Ascending aorta (tissue), 2 donors: ENCODE measurements at regions of chr2 and their contacts with region 1.

Region 1: DNA sequence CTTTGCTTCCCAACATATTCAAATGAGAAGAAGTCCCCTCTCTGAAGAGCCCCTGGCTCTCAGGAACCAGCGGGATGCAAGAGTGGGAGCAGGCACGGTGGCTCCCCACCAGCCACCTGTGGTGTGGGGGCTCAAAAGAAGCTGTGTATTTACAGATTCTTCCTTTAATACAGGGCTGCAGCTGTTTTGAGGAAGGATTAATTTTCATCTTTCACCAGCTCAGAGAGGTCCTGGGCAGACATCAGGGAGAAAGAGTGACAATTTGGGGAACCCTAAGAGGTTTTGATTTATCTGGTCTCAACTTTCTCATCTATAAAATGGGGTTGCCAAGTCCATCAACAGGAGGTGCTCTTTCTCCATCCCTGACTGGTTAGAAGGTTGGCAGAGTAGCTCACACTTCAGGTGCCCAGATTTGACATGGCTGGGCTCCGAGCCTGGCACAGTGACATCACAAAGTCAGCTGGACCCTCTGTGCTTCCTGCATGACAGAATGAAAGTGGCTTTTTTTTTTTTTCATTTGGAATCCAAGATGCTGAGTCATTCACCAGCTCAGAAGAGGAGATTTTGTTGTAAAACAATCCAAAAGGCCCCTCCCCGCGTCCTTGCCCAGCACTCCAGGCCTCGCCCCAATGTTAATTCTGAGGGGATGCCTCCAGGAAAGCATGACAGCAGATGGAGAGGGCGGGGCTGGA is 15.5 kb upstream of the SIX2 start:
- DNase-seq: peak; percentile 69 to 90
- H3K4me3 ChIP-seq: no peak overlapping the region
- H3K27ac ChIP-seq: peak overlapping the region in 1 of 2 donors; percentile 71
- H3K4me1 ChIP-seq: peaks cover 0 to 4% of the 10 kb centered on the region in 2 donors
- H3K27me3 ChIP-seq: no peaks in the 10 kb centered on the region
- CTCF ChIP-seq: peak; percentile 28 to 76 (median 59)

Region 2: DNA sequence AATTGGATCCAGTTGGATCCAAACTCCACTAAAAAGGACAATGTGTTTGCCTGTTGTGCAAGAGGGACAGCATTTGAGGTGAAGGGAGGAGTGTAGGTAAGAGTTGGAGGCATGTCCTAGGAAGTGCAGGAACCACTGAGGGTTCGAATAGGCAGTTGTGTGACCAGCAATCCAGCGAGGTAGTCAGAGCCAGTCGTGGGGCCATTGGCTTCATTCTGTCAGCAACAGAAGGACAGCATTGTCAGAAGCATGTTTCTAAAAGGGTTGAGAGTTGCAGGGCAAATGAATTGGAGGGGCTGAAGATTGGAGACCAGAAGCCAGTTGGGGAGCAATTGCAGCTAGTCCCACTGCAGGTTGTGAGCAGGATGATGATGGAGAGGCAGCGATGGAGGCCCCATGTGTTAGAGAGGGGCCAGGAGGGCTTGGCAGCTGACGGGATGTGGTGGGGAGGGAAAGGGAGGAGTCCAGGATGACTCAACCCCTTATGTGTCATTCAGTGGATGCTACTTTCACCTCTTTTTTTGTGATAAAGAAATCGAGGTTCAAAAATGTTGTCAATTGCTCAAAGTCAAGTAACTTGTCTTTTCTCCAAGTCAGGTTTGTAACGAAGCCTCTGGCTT is 180.0 kb before region 1 on chr2:
- intact Hi-C with region 1: no loop called
- DNase-seq: no peak
- H3K4me3 ChIP-seq: no peak overlapping the region
- H3K27ac ChIP-seq: no peak overlapping the region
- H3K4me1 ChIP-seq: no peaks in the 10 kb centered on the region
- H3K27me3 ChIP-seq: no peaks in the 10 kb centered on the region
- CTCF ChIP-seq: no peak

Region 3: DNA sequence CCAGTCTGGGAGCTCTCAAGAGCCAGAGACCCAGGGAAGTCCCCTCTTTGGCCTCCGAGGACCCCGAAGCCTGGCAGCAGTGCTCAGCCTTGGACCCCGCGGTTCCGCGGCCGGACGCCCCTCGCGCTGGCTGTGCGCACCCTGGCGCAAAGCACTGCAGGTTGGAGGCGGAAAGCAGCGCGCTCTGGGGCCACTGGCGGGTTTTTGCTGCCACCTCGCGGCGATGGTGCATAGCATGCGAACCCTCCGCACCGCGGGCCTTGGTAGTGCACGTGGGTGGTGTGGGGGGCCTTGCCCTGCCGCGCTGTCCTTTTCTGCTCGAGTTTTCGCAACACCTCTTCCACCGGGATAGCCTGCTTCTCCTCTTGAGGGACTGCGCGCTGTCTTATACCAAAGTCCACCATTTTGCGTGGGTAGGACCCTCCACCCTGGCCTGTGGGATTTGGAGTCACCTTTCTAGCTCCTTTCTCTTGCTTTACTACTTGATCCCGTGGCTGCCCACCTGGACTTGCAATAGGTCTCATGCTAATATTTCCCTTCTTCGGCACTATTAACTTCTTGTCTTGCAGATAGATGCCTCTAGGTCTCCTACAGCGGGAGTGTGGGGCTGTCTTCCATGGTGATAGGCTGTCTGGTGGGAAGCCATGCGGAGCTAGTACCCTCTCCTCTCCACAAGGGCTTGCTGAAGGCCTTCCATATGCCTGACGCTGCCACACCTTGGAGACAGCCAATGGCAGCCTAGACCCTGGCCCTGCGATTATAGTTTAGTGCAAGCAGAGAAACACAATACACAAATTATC is 69.0 kb before region 1 on chr2:
- intact Hi-C with region 1: no loop called
- DNase-seq: no peak
- H3K4me3 ChIP-seq: peak overlapping the region; percentile 33 to 60
- H3K27ac ChIP-seq: no peak overlapping the region
- H3K4me1 ChIP-seq: peaks cover 13 to 23% of the 10 kb centered on the region in 2 donors
- H3K27me3 ChIP-seq: peaks cover 14% of the 10 kb centered on the region
- CTCF ChIP-seq: peak; percentile 81 to 88 (median 83)

Region 4: GRCh38 chr2:44981136-44982108 is 43.3 kb before region 1 on chr2:
- intact Hi-C with region 1: loop called (anchors 1 kb)
- DNase-seq: peak in 1 of 2 donors; percentile 82
- H3K4me3 ChIP-seq: no peak overlapping the region
- H3K27ac ChIP-seq: no peak overlapping the region
- H3K4me1 ChIP-seq: peaks cover 0 to 4% of the 10 kb centered on the region in 2 donors
- H3K27me3 ChIP-seq: no peaks in the 10 kb centered on the region
- CTCF ChIP-seq: peak; percentile 66 to 85 (median 66)

Region 5: GRCh38 chr2:45067859-45068570 is 43.3 kb after region 1 on chr2:
- intact Hi-C with region 1: no loop called
- DNase-seq: no peak
- H3K4me3 ChIP-seq: no peak overlapping the region
- H3K27ac ChIP-seq: no peak overlapping the region
- H3K4me1 ChIP-seq: no peaks in the 10 kb centered on the region
- H3K27me3 ChIP-seq: no peaks in the 10 kb centered on the region
- CTCF ChIP-seq: no peak

Region 6: DNA sequence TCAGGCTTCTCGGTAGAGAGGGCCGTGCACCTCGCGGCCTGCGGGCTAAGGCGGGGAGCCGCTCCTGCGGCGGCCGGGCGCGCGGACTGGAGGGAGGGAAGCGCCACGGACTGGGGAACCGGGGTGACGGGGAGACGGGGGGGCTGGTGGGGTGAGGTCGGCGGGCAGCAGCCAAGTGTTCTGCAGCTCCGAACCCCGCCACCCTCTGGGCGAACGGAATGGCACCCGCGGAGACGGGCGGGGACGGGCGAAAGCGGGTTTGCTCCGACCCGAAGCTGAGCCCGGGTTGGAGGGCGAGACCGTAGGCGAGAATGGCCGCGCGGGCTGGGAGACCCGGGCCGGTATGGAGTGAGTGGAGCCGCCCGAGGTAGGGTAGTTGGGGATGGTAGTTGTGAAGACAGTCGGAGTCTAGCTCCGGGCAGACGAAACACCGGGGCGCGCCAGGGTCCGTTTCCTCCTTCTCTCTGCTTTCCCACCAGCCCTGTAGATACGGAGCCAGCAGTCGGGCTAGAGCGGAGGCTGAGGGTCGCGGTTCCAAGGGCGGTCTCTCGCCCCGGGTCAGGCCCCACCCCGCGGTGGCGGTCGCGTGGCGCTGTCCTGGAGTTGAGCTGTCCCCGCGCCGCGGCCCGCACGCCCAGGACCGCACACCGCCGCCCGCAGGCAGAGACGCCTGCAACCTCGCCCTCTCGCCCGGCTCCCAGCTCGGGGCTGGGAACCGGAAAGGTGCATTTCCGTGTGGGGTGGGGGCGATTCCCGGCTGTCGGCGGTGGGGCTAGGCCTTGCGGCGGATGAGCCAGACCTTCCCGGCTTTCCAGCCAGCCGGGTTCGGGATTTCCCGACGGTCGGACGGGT is 144.8 kb after region 1 on chr2:
- intact Hi-C with region 1: loop called (anchors 5 kb)
- DNase-seq: no peak
- H3K4me3 ChIP-seq: peak overlapping the region; percentile 70 to 71
- H3K27ac ChIP-seq: peak overlapping the region; percentile 57 to 65
- H3K4me1 ChIP-seq: peaks cover 0 to 2% of the 10 kb centered on the region in 2 donors
- H3K27me3 ChIP-seq: no peaks in the 10 kb centered on the region
- CTCF ChIP-seq: peak in 1 of 3 experiments; percentile 13

Region 7: DNA sequence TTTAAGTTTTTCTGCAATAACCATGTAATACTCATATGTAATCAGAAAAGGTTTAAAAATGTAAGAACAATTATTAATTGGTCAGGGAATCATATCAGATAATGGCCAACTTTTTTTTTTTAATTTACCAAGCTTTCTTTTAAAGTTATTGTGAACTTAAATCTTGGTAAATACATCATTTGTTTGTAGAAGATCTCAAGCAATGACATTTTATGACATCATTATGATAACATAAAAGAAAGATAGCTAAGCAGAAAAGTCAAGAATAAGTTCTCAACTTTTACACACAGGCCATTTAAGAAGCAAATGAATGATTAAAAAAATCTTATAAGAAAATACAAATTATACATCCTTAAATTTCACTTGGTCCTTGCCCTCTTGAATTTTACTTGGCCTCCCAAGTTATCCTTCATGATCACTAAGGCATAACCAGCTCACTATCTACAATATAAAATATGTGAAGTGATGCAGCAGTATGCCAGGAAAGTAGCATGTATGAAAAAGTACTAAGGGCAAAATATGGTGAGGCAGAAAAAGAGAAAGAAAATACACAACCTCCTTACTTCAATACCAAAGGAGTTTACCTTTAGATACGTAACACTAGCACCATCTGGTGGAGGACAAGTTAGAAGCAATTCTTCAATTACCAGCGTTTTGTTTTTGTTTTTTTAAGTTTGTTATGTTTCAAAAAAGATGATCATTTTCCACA is 469.7 kb after region 1 on chr2:
- intact Hi-C with region 1: loop called (anchors 2 kb)
- DNase-seq: no peak
- H3K4me3 ChIP-seq: no peak overlapping the region
- H3K27ac ChIP-seq: no peak overlapping the region
- H3K4me1 ChIP-seq: no peaks in the 10 kb centered on the region
- H3K27me3 ChIP-seq: no peaks in the 10 kb centered on the region
- CTCF ChIP-seq: peak; percentile 70 to 87 (median 75)

Region 8: GRCh38 chr2:45935791-45936622 is 911.3 kb after region 1 on chr2:
- intact Hi-C with region 1: loop called (anchors 5 kb)
- DNase-seq: peak; percentile 89 to 98
- H3K4me3 ChIP-seq: no peak overlapping the region
- H3K27ac ChIP-seq: no peak overlapping the region
- H3K4me1 ChIP-seq: peaks cover 4 to 10% of the 10 kb centered on the region in 2 donors
- H3K27me3 ChIP-seq: no peaks in the 10 kb centered on the region
- CTCF ChIP-seq: peak; percentile 67 to 83 (median 77)

Region 9: GRCh38 chr2:46847235-46848068 is 1822.7 kb after region 1 on chr2:
- intact Hi-C with region 1: loop called (anchors 10 kb)
- DNase-seq: peak; percentile 86 to 95
- H3K4me3 ChIP-seq: peak overlapping the region in 1 of 2 donors; percentile 5
- H3K27ac ChIP-seq: peak overlapping the region; percentile 89
- H3K4me1 ChIP-seq: peaks cover 46 to 56% of the 10 kb centered on the region in 2 donors
- H3K27me3 ChIP-seq: no peaks in the 10 kb centered on the region
- CTCF ChIP-seq: no peak